Activated CD4-positive, alpha-beta memory T cell treated with anti-CD3 and anti-CD28 coated beads for 36 hours (primary cell): ENCODE measurements at regions of chr3 and their contacts with region 1.

Region 1: DNA sequence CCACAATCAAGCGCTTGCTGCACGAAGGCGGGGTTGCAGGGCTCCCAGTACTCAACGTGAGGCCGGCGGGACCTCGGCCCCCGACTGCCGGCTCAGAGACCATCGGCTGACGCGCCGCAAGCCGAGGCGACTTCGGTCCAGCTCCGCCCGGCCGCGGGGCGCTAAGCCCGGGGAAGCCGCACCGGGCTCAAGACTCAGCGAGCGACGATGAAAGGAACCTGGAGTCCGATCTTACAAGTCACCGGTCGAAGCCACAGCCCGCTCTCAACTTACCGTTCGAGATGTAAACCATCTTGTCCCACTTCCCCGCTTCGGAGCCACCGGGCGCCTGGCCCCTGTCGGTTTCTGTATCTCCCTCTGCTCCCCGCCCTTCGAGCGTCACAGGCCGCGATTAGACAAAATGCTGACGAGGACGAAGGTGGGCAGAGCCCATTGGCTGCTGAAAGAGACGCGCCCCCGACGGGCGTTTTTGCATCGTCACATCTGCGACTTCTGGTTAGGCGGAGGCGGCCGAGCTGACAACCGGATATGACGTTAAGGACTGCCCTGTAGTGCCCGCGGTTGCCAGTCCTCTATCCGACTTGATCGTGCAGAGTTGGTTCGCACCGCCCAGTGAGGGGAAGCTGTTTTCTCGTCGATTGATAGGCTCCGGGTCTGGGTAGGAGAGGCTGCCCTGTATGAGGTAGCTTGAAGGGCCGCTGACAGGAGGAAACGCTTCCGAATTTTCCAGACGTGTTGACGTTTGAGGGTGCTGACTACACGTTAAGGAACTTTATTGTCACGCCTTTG is at the start of gene SELENOK:
- DNase-seq: peak; percentile 99
- H3K4me3 Mint-ChIP-seq: peak within 1 kb of the TSS; percentile 91
- H3K27ac Mint-ChIP-seq: peak within 1 kb of the TSS; percentile 97
- H3K4me1 Mint-ChIP-seq: peaks cover 47% of the 10 kb centered on the region
- H3K27me3 Mint-ChIP-seq: no peaks in the 10 kb centered on the region
- total RNA-seq, gene SELENOK: 55.3 to 56.4 TPM

Region 2: DNA sequence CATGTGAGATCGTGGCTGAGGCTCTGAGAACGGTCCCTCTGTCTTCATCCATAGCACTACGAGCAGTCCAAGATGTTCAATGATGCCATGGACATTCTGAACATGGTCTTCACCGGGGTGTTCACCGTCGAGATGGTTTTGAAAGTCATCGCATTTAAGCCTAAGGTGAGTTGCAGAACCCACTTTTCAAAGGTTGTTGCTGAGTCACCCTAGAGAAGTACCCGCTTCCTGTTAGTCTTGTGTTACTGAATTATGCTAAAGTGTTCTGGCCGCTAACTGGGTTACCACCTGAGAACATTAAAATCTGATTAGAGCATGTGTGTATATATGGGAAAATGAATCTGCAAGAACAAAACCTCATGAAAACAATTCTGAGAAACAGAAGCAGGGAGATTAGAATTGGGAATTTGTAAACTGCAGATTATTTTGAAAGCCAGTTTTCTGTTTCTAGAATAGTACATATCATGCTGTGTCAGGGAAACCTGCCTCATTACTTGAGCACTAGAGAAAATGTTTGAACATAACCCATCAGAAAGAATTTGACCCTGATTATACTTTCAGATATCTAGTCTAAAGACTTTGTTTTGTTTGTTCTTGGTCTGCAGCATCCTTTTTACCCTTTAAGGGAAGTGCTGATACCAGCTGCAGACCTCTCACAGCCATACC is 138.0 kb before region 1 on chr3:
- CTCF ChIA-PET with region 1: no interaction called
- POLR2A ChIA-PET with region 1: no interaction called
- intact Hi-C with region 1: loop called (anchors 5 kb)
- DNase-seq: peak; percentile 24
- H3K4me3 Mint-ChIP-seq: no peak overlapping the region
- H3K27ac Mint-ChIP-seq: peak overlapping the region; percentile 66
- H3K4me1 Mint-ChIP-seq: peaks cover 34% of the 10 kb centered on the region
- H3K27me3 Mint-ChIP-seq: peaks cover 8% of the 10 kb centered on the region